Ovary (tissue), 10 donors: ENCODE measurements at regions of chr7 and their contacts with region 1.

Region 1: DNA sequence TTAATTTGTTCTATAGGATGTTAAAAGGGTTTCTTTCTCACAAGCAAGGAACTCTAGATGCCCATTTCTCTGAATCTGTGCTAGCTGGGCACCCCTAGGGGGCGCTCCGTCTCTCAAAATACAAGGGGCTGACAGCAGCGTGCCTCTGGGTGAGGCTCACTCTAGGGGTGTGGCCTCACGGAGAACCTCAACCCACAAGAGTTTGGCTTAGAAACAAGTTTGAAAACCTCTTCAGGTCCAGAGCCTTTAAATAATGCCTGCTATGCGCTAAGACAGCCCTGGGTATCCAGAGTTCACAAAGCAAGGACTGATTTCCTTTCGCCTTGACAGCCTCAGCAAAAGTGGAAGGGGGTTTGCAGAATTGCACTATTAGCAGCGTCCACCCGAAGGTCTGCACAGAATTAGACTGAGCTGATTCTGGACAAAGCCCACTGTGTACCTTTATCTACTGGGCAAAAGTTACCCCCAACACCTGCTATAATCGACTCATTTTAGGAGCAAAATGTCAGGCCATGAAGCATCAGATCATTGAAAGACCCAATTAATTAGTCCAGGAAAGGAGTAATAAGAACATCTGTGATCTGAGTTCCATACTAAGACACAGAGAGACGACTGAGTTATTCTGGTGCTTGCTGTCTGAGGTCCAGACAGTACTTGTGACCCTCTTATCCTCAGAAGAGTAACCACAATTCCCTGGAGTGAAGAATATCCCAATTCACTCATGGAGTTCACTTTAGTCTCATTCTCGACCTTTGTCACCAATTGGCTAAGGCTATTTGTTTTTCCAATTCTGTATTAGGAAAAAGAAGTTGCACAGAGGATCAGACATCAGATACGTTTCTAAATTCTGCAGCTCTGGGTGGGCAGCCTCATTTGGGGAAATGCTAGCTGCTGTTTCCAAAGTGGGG is 574 bp upstream of the CPED1 start:
- DNase-seq: peak; percentile 91 to 94 (median 93)
- H3K4me3 ChIP-seq: peak overlapping the region; percentile 43
- H3K27ac ChIP-seq: peak overlapping the region; percentile 79 to 87
- H3K4me1 ChIP-seq: no peaks in the 10 kb centered on the region
- H3K27me3 ChIP-seq: no peaks in the 10 kb centered on the region
- CTCF ChIP-seq: peak; percentile 83 to 94 (median 89)
- EP300 ChIP-seq: no peak
- POLR2A ChIP-seq: no peak

Region 2: GRCh38 chr7:120691915-120692314 is 296.0 kb before region 1 on chr7:
- intact Hi-C with region 1: no loop called
- DNase-seq: no peak
- H3K4me3 ChIP-seq: no peak overlapping the region
- H3K27ac ChIP-seq: no peak overlapping the region
- H3K4me1 ChIP-seq: no peaks in the 10 kb centered on the region
- H3K27me3 ChIP-seq: no peaks in the 10 kb centered on the region
- CTCF ChIP-seq: no peak
- EP300 ChIP-seq: no peak
- POLR2A ChIP-seq: no peak

Region 3: GRCh38 chr7:121081327-121081936 is 93.5 kb after region 1 on chr7:
- intact Hi-C with region 1: loop called (anchors 2 to 5 kb)
- DNase-seq: no peak
- H3K4me3 ChIP-seq: no peak overlapping the region
- H3K27ac ChIP-seq: peak overlapping the region in 1 of 2 donors; percentile 16
- H3K4me1 ChIP-seq: peaks cover 5% of the 10 kb centered on the region
- H3K27me3 ChIP-seq: no peaks in the 10 kb centered on the region
- CTCF ChIP-seq: peak; percentile 69 to 79 (median 78)
- EP300 ChIP-seq: no peak
- POLR2A ChIP-seq: no peak

Region 4: DNA sequence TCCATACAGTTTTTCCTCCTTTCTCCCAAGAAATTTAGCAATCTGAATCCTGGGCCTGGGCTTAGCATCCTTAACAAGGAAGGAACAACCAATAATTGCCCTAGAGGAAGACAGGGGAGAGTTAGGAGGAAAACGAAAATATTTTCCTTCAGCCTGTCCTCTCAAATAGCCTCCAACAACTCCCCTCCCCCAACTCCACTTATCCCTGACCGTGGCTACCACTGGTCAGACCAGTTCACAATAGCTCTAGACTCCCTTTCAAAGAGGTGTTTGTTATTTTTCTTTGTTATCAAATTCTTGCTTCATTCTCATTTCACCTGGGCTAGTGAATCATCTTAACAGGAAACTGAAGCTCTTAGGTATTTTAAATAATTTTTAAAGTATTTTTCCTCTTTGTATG is 114.7 kb after region 1 on chr7:
- intact Hi-C with region 1: loop called in 1 of 4 experiments (anchors 5 kb)
- DNase-seq: no peak
- H3K4me3 ChIP-seq: no peak overlapping the region
- H3K27ac ChIP-seq: no peak overlapping the region
- H3K4me1 ChIP-seq: no peaks in the 10 kb centered on the region
- H3K27me3 ChIP-seq: no peaks in the 10 kb centered on the region
- CTCF ChIP-seq: no peak
- EP300 ChIP-seq: no peak
- POLR2A ChIP-seq: no peak